ENCODE measurements at regions of chr5 and their contacts with region 1.

Region 1: DNA sequence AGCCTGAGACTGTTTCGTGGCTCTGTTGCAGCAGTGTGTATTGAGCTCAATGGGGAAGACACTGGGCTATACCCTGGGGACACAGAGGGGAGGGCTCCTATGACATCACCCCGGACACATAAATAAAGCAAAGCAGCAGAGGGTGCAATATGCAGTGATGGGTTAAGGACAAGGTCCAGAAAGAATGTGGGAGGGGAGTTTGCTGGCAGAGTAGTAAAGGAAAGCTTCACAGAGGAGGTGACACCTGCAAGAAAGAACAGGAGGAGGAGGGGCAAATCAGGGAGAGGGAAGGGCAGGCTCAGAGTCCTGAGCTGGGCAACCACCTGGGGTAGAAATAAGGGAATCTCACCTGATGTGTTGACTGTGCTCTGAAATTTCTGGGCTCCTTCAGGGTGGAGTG is 35.3 kb upstream of the CDKN2AIPNL start:
- DNase-seq: peak; percentile 84
- ATAC-seq: peak; percentile 86
- H3K4me3 ChIP-seq: peak overlapping the region in 1 of 5 experiments; percentile 38
- H3K4me3 Mint-ChIP-seq: peak overlapping the region; percentile 79
- H3K27ac ChIP-seq: peak overlapping the region; percentile 47 to 52
- H3K27ac Mint-ChIP-seq: peak overlapping the region; percentile 87
- H3K4me1 ChIP-seq: peaks cover 37 to 42% of the 10 kb centered on the region in 2 donors
- H3K4me1 Mint-ChIP-seq: peaks cover 56% of the 10 kb centered on the region
- H3K27me3 ChIP-seq: no peaks in the 10 kb centered on the region
- H3K27me3 Mint-ChIP-seq: no peaks in the 10 kb centered on the region
- CTCF ChIP-seq: no peak

Region 2: DNA sequence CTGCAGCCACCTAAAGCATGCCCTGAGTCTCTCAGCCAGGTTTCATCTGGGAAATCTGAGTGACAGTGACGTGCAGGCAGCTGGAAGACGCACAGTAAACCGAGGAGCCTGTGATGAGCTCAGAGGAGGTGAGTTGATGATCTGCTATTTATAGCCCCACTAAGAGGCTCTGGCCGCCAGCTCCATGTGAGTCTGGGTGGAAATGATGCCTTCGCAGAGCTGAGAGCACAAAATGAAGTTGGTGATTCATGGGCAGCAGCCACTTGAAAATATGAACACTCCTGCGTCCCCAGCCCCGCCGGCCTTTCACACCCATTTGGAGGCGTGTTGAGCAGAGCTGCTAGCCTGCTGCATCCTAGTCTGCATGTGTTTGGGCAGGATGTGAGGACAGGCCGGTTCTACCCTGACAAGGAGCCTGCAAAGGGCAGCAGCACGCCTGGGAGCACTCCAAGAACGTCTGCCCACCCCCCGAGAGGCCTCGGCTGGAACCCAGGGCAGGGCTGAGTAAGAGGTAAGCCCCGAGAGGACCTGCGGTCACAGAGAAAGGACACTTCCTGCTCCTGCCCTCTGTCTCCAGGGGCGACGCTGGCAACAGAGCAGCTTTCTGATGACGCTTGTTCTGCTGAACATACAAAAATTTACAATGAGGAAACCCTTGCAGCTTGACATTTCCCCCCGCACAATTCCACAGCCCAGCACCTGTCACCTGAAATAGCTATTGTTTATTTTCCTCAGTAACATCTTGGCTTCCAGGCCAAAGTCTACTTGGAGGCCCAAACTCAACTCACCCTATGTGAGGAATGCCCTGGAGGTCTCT is 10.2 kb before region 1 on chr5:
- CTCF ChIA-PET with region 1: interaction called, 13 read pairs
- POLR2A ChIA-PET with region 1: interaction called, 20 read pairs
- intact Hi-C with region 1: loop called (anchors 1 kb)
- DNase-seq: peak; percentile 76
- ATAC-seq: peak; percentile 96
- H3K4me3 ChIP-seq: peak overlapping the region in 2 of 5 experiments; percentile 18 to 44
- H3K4me3 Mint-ChIP-seq: peak overlapping the region; percentile 53
- H3K27ac ChIP-seq: peak overlapping the region; percentile 43 to 64
- H3K27ac Mint-ChIP-seq: peak overlapping the region; percentile 70
- H3K4me1 ChIP-seq: peaks cover 12 to 17% of the 10 kb centered on the region in 2 donors
- H3K4me1 Mint-ChIP-seq: peaks cover 30% of the 10 kb centered on the region
- H3K27me3 ChIP-seq: peaks cover 0 to 3% (median 0%) of the 10 kb centered on the region in 4 experiments
- H3K27me3 Mint-ChIP-seq: no peaks in the 10 kb centered on the region
- CTCF ChIP-seq: no peak

Region 3: GRCh38 chr5:134465816-134466240 is 18.9 kb after region 1 on chr5:
- CTCF ChIA-PET with region 1: interaction called, 9 read pairs
- POLR2A ChIA-PET with region 1: interaction called, 9 read pairs
- intact Hi-C with region 1: loop called (anchors 1 kb)
- DNase-seq: peak; percentile 65
- ATAC-seq: peak; percentile 82
- H3K4me3 ChIP-seq: peak overlapping the region; percentile 56 to 76 (median 58)
- H3K4me3 Mint-ChIP-seq: peak overlapping the region; percentile 89
- H3K27ac ChIP-seq: peak overlapping the region in 1 of 2 donors; percentile 42
- H3K27ac Mint-ChIP-seq: peak overlapping the region; percentile 87
- H3K4me1 ChIP-seq: peaks cover 26 to 36% of the 10 kb centered on the region in 2 donors
- H3K4me1 Mint-ChIP-seq: peaks cover 41% of the 10 kb centered on the region
- H3K27me3 ChIP-seq: no peaks in the 10 kb centered on the region
- H3K27me3 Mint-ChIP-seq: no peaks in the 10 kb centered on the region
- CTCF ChIP-seq: no peak

Region 4: DNA sequence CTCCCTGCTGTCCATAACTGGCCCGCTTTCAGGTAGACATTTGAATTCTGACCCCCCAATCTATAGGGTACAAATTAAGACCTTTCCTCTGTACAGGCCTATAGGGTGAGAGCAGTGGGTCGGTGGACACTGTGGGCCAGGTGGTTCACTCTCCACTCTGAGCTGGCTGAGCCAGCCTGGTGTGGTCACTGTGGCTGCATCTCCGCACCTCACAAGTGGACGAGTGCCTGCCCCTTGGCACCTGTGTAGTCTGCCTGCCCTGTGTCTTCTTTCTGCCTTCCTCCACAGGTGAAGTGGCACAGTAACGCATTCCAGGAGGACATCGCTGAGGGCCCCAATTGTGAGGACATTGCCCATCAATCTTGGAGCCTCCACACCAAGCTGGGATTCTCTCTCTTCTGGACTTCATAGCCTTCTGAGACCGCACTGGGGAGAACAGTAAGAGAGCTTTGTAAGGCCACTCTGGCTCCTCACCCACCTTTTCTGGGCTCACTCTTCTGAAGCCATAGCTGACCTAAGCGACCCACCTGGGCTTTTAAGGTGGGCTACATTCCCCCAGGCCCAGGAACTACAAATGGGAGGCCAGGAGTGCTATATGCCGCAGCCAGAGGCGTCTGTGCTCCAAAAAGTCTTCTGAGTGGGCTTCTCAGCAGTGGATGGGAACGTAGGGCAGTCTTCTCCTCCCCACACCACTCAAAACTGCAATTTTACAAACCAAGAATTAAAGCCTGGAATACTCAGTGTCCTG is 45.1 kb after region 1 on chr5:
- CTCF ChIA-PET with region 1: no interaction called
- POLR2A ChIA-PET with region 1: no interaction called
- intact Hi-C with region 1: no loop called
- DNase-seq: no peak
- ATAC-seq: no peak
- H3K4me3 ChIP-seq: no peak overlapping the region
- H3K4me3 Mint-ChIP-seq: no peak overlapping the region
- H3K27ac ChIP-seq: no peak overlapping the region
- H3K27ac Mint-ChIP-seq: no peak overlapping the region
- H3K4me1 ChIP-seq: no peaks in the 10 kb centered on the region
- H3K4me1 Mint-ChIP-seq: no peaks in the 10 kb centered on the region
- H3K27me3 ChIP-seq: no peaks in the 10 kb centered on the region
- H3K27me3 Mint-ChIP-seq: no peaks in the 10 kb centered on the region
- CTCF ChIP-seq: no peak

Region 5: DNA sequence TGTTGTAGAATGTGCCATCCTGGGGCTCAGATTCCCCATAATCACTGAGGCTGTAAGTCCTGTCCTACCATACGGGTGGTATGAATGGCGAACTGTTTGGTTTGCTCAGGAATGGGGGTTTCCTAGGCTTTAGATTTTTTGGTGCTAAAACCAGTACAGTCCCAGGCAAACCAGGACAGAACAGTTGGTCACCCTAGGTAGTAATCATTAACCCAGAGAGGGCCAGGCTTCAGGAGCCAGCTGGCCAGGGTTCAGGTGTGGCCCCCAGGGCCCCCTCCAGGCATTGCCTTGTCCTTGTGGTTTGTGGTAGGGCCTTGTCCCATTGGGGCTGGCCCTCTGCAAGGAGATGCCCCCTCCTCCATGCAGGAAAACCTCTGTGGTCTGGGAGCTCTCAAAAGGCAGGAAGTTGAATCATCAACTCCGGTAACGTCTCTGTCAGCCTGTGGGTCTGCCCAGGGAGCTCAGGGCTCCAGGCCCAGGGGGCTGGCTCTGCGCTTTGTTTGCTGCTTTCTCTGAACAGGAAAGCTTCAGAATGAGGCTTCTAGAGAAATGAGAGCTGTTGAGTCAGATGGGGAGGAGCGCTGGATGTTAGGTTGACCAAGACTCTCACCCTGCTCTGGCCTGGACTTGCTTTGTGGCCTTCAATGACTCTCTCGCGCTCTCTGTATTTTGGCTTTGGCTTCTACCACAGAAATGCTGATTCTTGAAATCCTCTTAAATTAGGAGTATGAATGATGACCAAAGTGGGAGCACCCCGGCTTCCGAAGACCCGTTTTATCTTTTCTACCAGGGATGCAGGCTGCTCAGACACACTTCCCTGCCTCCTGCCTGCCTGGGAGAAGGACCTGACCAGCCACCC is 56.4 kb after region 1 on chr5:
- CTCF ChIA-PET with region 1: no interaction called
- POLR2A ChIA-PET with region 1: no interaction called
- intact Hi-C with region 1: no loop called
- DNase-seq: no peak
- ATAC-seq: peak; percentile 7
- H3K4me3 ChIP-seq: no peak overlapping the region
- H3K4me3 Mint-ChIP-seq: no peak overlapping the region
- H3K27ac ChIP-seq: no peak overlapping the region
- H3K27ac Mint-ChIP-seq: no peak overlapping the region
- H3K4me1 ChIP-seq: peaks cover 0 to 14% of the 10 kb centered on the region in 2 donors
- H3K4me1 Mint-ChIP-seq: peaks cover 7% of the 10 kb centered on the region
- H3K27me3 ChIP-seq: no peaks in the 10 kb centered on the region
- H3K27me3 Mint-ChIP-seq: no peaks in the 10 kb centered on the region
- CTCF ChIP-seq: no peak